Esophagus muscularis mucosa (tissue), 4 donors: ENCODE measurements at regions of chr11 and their contacts with region 1.

Region 1: DNA sequence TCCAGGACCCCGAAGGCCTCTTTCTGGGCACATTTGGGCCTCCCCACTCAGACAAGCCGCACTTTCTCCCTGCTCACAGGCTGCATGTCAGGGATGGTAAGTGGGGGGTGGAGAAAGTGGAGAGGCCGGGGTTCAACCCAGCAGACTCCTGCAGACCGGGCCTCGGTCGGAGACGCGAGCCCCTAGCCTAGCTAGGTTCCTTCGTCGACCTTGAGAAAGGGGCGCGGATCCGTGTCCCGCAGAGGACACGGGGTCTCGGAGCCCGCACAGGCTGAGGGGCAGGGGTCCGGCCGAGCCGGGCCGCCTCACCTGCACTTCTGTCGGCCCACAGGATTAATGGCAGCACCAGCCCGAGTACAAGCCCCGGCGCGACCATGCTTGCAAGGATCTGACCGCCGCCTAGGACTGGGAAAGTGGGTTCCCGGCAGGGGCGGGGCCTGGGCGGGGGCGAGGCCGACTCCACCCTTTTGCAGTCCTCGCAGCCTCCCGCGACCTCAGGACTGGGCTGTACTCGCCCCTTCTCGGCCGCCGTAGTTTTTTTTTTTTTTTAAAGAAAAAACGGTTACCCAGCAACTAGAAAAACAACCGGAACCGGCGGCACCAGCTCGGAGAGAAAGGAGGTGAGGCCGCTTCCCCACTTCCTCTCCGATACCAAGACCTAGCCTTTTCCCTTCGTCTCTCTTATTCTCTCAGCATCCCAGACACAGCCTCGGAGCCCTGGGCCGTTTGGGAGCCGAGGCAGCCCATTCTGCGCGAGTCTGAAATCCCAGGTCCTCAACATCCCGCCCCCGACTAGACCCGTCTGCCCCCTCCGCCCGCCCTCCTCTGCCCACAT is at the starts of genes SIAE and SPA17:
- DNase-seq: peak; percentile 98
- H3K4me3 ChIP-seq: peak within 1 kb of the TSS; percentile 68 to 79 (median 74)
- H3K27ac ChIP-seq: peak within 1 kb of the TSS; percentile 81 to 90 (median 85)
- H3K4me1 ChIP-seq: peaks cover 17 to 25% (median 19%) of the 10 kb centered on the region in 4 donors
- H3K27me3 ChIP-seq: no peaks in the 10 kb centered on the region
- CTCF ChIP-seq: no peak
- EP300 ChIP-seq: no peak
- POLR2A ChIP-seq: no peak
- total RNA-seq, gene SIAE: 3.1 to 4.5 (median 3.5) TPM
- total RNA-seq, gene SPA17: 4.2 to 8.6 (median 5.8) TPM

Region 2: GRCh38 chr11:124739479-124740276 is 66.1 kb after region 1 on chr11 and contains the start of gene NRGN:
- intact Hi-C with region 1: loop called (anchors 5 kb)
- DNase-seq: peak; percentile 96
- H3K4me3 ChIP-seq: peak within 1 kb of the TSS; percentile 54 to 69 (median 59)
- H3K27ac ChIP-seq: peak within 1 kb of the TSS in 1 of 4 donors; percentile 0
- H3K4me1 ChIP-seq: peaks cover 12 to 21% (median 20%) of the 10 kb centered on the region in 4 donors
- H3K27me3 ChIP-seq: peaks cover 7 to 89% (median 22%) of the 10 kb centered on the region in 4 donors
- CTCF ChIP-seq: no peak
- EP300 ChIP-seq: no peak
- POLR2A ChIP-seq: no peak
- total RNA-seq, gene NRGN: 1.4 to 2.3 (median 1.6) TPM

Region 3: GRCh38 chr11:124763156-124763947 is 89.8 kb after region 1 on chr11:
- intact Hi-C with region 1: loop called (anchors 1 kb)
- DNase-seq: peak; percentile 93
- H3K4me3 ChIP-seq: peak overlapping the region; percentile 52 to 65 (median 54)
- H3K27ac ChIP-seq: peak overlapping the region; percentile 69 to 82 (median 82)
- H3K4me1 ChIP-seq: peaks cover 26 to 53% (median 43%) of the 10 kb centered on the region in 4 donors
- H3K27me3 ChIP-seq: peaks cover 5 to 48% (median 38%) of the 10 kb centered on the region in 4 donors
- CTCF ChIP-seq: peak; percentile 60 to 76 (median 63)
- EP300 ChIP-seq: no peak
- POLR2A ChIP-seq: no peak

Region 4: GRCh38 chr11:124837491-124837856 is 163.9 kb after region 1 on chr11:
- intact Hi-C with region 1: loop called (anchors 2 kb)
- DNase-seq: no peak
- H3K4me3 ChIP-seq: no peak overlapping the region
- H3K27ac ChIP-seq: peak overlapping the region in 1 of 4 donors; percentile 68
- H3K4me1 ChIP-seq: peaks cover 15 to 28% (median 24%) of the 10 kb centered on the region in 4 donors
- H3K27me3 ChIP-seq: peaks cover 15 to 60% (median 39%) of the 10 kb centered on the region in 4 donors
- CTCF ChIP-seq: no peak
- EP300 ChIP-seq: no peak
- POLR2A ChIP-seq: no peak

Region 5: GRCh38 chr11:124953753-124954589 is 280.4 kb after region 1 on chr11 and contains the start of gene CCDC15:
- intact Hi-C with region 1: loop called (anchors 5 kb)
- DNase-seq: peak; percentile 99
- H3K4me3 ChIP-seq: peak within 1 kb of the TSS; percentile 72 to 77 (median 74)
- H3K27ac ChIP-seq: peak within 1 kb of the TSS; percentile 80 to 88 (median 82)
- H3K4me1 ChIP-seq: peaks cover 6 to 17% (median 14%) of the 10 kb centered on the region in 4 donors
- H3K27me3 ChIP-seq: no peaks in the 10 kb centered on the region
- CTCF ChIP-seq: no peak
- EP300 ChIP-seq: no peak
- POLR2A ChIP-seq: peak; percentile 30
- total RNA-seq, gene CCDC15: 0.42 to 1.6 (median 0.60) TPM